Activated B cell treated with CpG ODN at 0.5 μM for 24 hours (primary cell): ENCODE measurements at regions of chr11 and their contacts with region 1.

Region 1: GRCh38 chr11:107770551-107770951 is 58.7 kb upstream of the SLN start:
- DNase-seq: no peak
- ATAC-seq: no peak
- H3K4me3 Mint-ChIP-seq: no peak overlapping the region
- H3K27ac Mint-ChIP-seq: no peak overlapping the region
- H3K4me1 Mint-ChIP-seq: no peaks in the 10 kb centered on the region
- H3K27me3 Mint-ChIP-seq: peaks cover 8% of the 10 kb centered on the region
- CTCF ChIP-seq: no peak

Region 2: DNA sequence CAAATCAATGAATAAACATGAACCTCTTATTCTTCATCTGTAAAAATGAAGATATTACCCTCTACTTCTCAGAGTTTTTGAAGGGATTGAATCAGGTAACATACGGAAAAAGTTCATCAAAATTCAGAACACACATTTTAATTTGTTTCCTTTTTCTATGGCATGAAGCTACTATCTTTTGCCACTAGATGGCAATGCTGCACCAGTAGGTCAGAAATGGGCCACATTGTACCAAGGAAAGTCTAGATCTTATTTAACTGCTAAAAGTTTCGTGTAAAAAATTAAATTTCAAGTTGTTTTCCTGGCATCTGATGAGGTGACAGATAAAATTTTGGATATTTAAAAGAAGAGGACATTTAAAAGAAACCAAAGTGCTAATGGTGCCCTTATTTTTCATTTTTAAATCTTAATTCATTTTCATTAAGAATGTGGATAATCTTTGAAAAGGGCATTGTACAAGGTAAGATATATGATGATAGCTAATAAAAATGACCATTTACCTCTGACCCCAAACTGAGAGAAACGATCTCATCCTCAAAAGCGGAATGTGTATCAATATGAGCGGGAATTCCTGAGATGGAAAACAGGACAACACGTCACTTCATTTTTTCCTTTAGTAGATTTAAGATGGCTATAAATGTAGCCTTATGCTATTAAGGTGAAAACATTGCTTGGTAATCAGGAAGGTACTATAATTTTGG is 221.1 kb before region 1 on chr11:
- CTCF ChIA-PET with region 1: interaction called, 19 read pairs
- POLR2A ChIA-PET with region 1: no interaction called
- intact Hi-C with region 1: loop called (anchors 1 kb)
- DNase-seq: no peak
- ATAC-seq: peak; percentile 67
- H3K4me3 Mint-ChIP-seq: no peak overlapping the region
- H3K27ac Mint-ChIP-seq: no peak overlapping the region
- H3K4me1 Mint-ChIP-seq: no peaks in the 10 kb centered on the region
- H3K27me3 Mint-ChIP-seq: no peaks in the 10 kb centered on the region
- CTCF ChIP-seq: peak; percentile 67

Region 3: DNA sequence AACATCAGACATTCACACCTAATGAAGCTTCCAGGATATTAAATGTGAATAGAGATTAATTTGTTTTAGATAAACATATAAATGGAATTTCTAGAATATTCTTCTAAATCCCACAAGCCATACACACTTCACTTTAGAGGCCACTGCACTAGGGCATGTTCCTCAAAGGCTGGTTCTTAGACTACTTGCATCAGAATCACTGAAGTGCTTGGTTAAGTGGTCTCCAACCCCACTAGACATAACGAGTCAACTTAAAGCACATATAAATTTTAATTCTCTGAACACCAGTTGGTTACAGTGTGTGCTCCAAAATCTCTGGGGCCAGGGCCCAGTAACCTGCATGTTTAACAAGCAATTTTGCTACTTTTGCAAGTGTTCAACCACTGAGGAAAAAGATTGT is 197.1 kb before region 1 on chr11:
- CTCF ChIA-PET with region 1: interaction called, 3 read pairs
- POLR2A ChIA-PET with region 1: no interaction called
- intact Hi-C with region 1: loop called (anchors 1 kb)
- DNase-seq: no peak
- ATAC-seq: no peak
- H3K4me3 Mint-ChIP-seq: no peak overlapping the region
- H3K27ac Mint-ChIP-seq: no peak overlapping the region
- H3K4me1 Mint-ChIP-seq: peaks cover 2% of the 10 kb centered on the region
- H3K27me3 Mint-ChIP-seq: no peaks in the 10 kb centered on the region
- CTCF ChIP-seq: no peak

Region 4: DNA sequence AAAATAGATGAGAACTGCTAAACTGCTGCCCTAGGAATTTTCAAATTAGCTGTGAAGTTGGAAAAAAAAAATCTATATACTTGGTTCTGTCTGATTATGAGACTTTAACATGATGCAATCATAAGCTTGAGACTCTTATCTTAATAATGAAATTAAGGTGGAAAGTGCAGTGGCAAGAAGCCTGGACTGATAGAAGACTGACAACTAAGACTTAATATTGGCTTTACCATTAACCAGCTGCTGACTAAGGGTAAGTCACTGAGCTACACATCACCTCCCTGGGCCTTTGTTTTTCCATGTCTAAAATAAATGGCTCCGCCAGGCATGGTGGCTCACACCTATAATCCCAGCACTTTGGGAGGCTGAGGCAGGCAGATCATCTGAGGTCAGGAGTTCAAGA is 31.1 kb after region 1 on chr11:
- CTCF ChIA-PET with region 1: no interaction called
- POLR2A ChIA-PET with region 1: no interaction called
- intact Hi-C with region 1: no loop called
- DNase-seq: no peak
- ATAC-seq: no peak
- H3K4me3 Mint-ChIP-seq: no peak overlapping the region
- H3K27ac Mint-ChIP-seq: no peak overlapping the region
- H3K4me1 Mint-ChIP-seq: no peaks in the 10 kb centered on the region
- H3K27me3 Mint-ChIP-seq: no peaks in the 10 kb centered on the region
- CTCF ChIP-seq: no peak

Region 5: GRCh38 chr11:108543316-108543964 is 772.9 kb after region 1 on chr11:
- CTCF ChIA-PET with region 1: no interaction called
- POLR2A ChIA-PET with region 1: no interaction called
- intact Hi-C with region 1: no loop called
- DNase-seq: no peak
- ATAC-seq: no peak
- H3K4me3 Mint-ChIP-seq: no peak overlapping the region
- H3K27ac Mint-ChIP-seq: no peak overlapping the region
- H3K4me1 Mint-ChIP-seq: no peaks in the 10 kb centered on the region
- H3K27me3 Mint-ChIP-seq: peaks cover 1% of the 10 kb centered on the region
- CTCF ChIP-seq: no peak